ENCODE measurements at regions of chr5 and their contacts with region 1.

Region 1: DNA sequence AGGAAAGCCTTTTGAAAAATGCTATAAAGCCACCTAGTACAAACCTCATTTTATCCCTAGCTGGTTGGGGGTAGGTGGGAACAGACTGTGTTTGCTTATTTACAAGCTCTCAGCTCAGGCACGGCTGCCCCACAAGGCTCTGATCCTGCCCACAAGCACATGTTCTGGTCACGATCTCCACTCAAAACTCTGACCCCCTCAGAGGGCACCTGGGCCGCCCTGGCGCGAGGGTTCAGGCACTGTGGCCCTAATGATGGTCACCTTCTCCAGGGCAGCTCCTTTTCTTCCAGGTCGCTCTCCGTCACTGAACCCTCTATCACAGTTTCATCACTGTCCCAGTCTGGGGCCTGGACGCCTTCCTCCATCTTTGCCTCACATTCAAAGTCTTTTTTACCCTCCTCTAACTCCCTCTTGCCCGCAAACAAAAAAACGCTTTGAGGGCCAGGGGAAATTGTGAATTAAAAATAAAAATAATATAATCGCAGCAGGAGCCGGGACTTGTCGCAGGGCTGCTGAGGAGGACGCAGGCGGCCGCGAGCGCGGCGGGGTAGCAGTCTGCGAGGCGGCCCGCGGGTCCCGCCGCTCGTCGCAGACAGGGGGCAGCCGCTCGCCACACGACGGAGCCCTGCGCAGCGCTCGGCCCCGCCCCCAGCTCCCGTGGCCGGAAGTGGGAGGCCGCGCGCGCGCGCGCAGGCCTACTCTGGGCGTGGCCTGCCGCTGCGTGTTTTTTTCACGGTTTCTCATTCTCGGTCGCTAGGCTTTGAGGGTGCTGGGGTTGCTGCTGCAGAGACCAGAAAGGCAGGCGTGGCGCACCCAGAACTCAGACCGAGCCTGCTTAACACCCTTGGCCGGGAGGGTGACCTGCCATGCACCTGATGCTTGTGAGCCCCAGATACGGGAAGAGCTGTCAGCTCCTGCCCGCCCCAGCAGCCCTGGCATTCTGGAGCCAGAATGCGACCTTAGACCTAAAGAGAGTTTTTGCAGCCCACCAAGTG is at the start of gene ANKRD31:
- DNase-seq: peak; percentile 95
- ATAC-seq: peak; percentile 100
- H3K4me3 ChIP-seq: peak within 1 kb of the TSS; percentile 72
- H3K27ac ChIP-seq: peak within 1 kb of the TSS; percentile 78
- H3K4me1 ChIP-seq: peaks cover 5% of the 10 kb centered on the region
- H3K27me3 ChIP-seq: no peaks in the 10 kb centered on the region
- CTCF ChIP-seq: peak; percentile 81
- total RNA-seq, gene ANKRD31: 0.14 TPM

Region 2: GRCh38 chr5:75681125-75681830 is 444.7 kb after region 1 on chr5:
- intact Hi-C with region 1: loop called (anchors 10 kb)
- DNase-seq: no peak
- ATAC-seq: peak; percentile 25
- H3K4me3 ChIP-seq: no peak overlapping the region
- H3K27ac ChIP-seq: no peak overlapping the region
- H3K4me1 ChIP-seq: no peaks in the 10 kb centered on the region
- H3K27me3 ChIP-seq: no peaks in the 10 kb centered on the region
- CTCF ChIP-seq: peak; percentile 89